CD4-positive, alpha-beta T cell (primary cell): ENCODE measurements at regions of chr9 and their contacts with region 1.

Region 1: DNA sequence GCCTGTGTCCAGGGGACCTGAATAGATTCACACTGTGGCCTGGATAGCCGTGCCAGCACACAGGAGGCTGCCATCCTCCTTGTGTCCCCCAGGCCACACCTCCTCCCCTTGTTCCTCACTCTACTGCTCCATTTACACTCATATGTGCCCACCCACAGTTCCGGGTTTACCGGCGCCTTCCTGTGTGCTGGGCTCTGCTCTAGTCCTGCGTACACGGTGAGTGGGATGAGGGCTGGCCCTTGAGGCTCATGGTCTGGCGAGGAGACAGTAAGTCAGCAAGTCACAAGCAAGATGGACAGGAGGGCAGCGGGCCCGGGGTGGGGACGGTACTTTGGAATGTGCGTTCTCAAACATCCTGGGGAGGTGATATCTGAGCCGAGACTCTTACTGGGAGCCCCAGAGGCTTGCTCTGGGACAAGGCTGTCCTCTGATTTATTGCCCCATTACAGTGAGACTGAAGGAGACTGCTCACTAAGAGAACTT is 32.4 kb upstream of the NXNL2 start:
- DNase-seq: no peak
- ATAC-seq: no peak
- H3K4me3 ChIP-seq: no peak overlapping the region
- H3K4me3 Mint-ChIP-seq: no peak overlapping the region
- H3K27ac ChIP-seq: no peak overlapping the region
- H3K27ac Mint-ChIP-seq: no peak overlapping the region
- H3K4me1 ChIP-seq: no peaks in the 10 kb centered on the region
- H3K4me1 Mint-ChIP-seq: no peaks in the 10 kb centered on the region
- H3K27me3 ChIP-seq: no peaks in the 10 kb centered on the region
- H3K27me3 Mint-ChIP-seq: no peaks in the 10 kb centered on the region
- CTCF ChIP-seq: no peak

Region 2: DNA sequence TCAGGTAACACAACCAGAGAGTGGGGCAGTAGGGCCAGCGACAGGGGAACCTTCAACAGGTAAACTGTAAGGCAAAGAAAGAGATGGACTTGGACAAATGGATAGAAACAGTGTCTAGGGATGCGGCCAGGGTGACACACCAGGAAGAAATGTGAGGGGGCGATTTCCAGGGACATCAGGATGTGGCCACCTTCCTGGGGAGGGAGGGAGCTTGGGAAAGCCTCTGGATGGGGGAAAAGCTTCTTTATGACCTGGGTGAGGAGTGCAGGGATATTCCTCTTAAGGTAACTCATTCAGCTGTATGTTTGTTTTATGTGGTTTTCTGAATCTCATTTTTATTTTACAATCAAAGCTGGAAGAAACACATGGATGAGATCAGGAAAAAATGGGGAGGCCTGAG is 20.5 kb after region 1 on chr9:
- CTCF ChIA-PET with region 1: no interaction called
- POLR2A ChIA-PET with region 1: no interaction called
- intact Hi-C with region 1: loop called in 1 of 2 experiments (anchors 1 kb)
- DNase-seq: no peak
- ATAC-seq: no peak
- H3K4me3 ChIP-seq: no peak overlapping the region
- H3K4me3 Mint-ChIP-seq: no peak overlapping the region
- H3K27ac ChIP-seq: no peak overlapping the region
- H3K27ac Mint-ChIP-seq: no peak overlapping the region
- H3K4me1 ChIP-seq: no peaks in the 10 kb centered on the region
- H3K4me1 Mint-ChIP-seq: no peaks in the 10 kb centered on the region
- H3K27me3 ChIP-seq: no peaks in the 10 kb centered on the region
- H3K27me3 Mint-ChIP-seq: peaks cover 4% of the 10 kb centered on the region
- CTCF ChIP-seq: no peak

Region 3: DNA sequence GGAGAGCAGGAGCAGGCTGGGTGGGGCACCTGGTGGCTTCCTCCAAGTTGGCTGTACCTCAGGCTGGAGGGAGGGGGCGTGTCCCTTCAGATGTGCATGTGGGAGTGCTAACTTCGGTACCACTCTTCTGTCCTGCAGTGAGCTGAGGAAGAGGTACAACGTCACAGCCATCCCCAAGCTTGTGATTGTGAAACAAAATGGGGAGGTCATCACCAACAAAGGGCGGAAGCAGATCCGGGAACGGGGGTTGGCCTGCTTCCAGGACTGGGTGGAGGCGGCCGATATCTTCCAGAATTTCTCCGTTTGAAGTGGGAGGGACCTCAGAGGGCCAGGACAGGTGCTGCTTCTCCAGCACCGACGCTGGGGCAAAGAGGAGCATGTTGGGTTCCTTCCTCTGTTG is 41.6 kb after region 1 on chr9:
- CTCF ChIA-PET with region 1: no interaction called
- POLR2A ChIA-PET with region 1: no interaction called
- intact Hi-C with region 1: no loop called
- DNase-seq: no peak
- ATAC-seq: no peak
- H3K4me3 ChIP-seq: no peak overlapping the region
- H3K4me3 Mint-ChIP-seq: no peak overlapping the region
- H3K27ac ChIP-seq: no peak overlapping the region
- H3K27ac Mint-ChIP-seq: no peak overlapping the region
- H3K4me1 ChIP-seq: no peaks in the 10 kb centered on the region
- H3K4me1 Mint-ChIP-seq: no peaks in the 10 kb centered on the region
- H3K27me3 ChIP-seq: peaks cover 0 to under 1% of the 10 kb centered on the region in 2 experiments
- H3K27me3 Mint-ChIP-seq: peaks cover 29% of the 10 kb centered on the region
- CTCF ChIP-seq: no peak

Region 4: GRCh38 chr9:88694625-88695024 is 192.0 kb after region 1 on chr9:
- CTCF ChIA-PET with region 1: no interaction called
- POLR2A ChIA-PET with region 1: no interaction called
- intact Hi-C with region 1: no loop called
- DNase-seq: no peak
- ATAC-seq: no peak
- H3K4me3 ChIP-seq: no peak overlapping the region
- H3K4me3 Mint-ChIP-seq: no peak overlapping the region
- H3K27ac ChIP-seq: no peak overlapping the region
- H3K27ac Mint-ChIP-seq: no peak overlapping the region
- H3K4me1 ChIP-seq: no peaks in the 10 kb centered on the region
- H3K4me1 Mint-ChIP-seq: no peaks in the 10 kb centered on the region
- H3K27me3 ChIP-seq: peaks cover 2 to 3% of the 10 kb centered on the region in 2 experiments
- H3K27me3 Mint-ChIP-seq: peaks cover 37% of the 10 kb centered on the region
- CTCF ChIP-seq: no peak